Caco-2 (cell line): ENCODE measurements at regions of chrX and their contacts with region 1.

Region 1: GRCh38 chrX:129462707-129463106 is 60.6 kb downstream of the SMARCA1 start:
- DNase-seq: no peak
- H3K4me3 ChIP-seq: no peak overlapping the region
- H3K4me3 Mint-ChIP-seq: no peak overlapping the region
- H3K27ac Mint-ChIP-seq: no peak overlapping the region
- H3K4me1 ChIP-seq: no peaks in the 10 kb centered on the region
- H3K4me1 Mint-ChIP-seq: no peaks in the 10 kb centered on the region
- H3K27me3 ChIP-seq: no peaks in the 10 kb centered on the region
- H3K27me3 Mint-ChIP-seq: no peaks in the 10 kb centered on the region
- CTCF ChIP-seq: no peak

Region 2: DNA sequence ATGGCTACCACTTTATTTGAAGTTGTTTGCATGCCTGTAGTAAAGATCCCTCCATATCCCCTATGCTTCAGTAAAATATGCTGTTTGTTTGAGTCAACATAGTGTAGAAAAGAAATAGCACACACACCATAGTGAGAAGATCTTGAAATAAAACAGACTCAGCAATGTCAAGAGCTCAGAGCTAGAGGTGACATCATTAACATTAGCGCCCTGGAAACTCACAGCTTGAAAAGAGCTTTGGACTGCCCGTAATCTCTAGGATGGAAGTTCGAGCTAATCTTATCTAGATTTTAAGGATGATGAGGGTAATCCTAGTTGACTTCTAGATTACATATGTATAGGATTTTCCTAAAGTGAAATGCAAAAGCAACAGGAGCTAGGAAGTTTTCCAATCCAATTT is 215.1 kb before region 1 on chrX:
- CTCF ChIA-PET with region 1: no interaction called
- POLR2A ChIA-PET with region 1: no interaction called
- intact Hi-C with region 1: no loop called
- DNase-seq: no peak
- H3K4me3 ChIP-seq: no peak overlapping the region
- H3K4me3 Mint-ChIP-seq: no peak overlapping the region
- H3K27ac Mint-ChIP-seq: no peak overlapping the region
- H3K4me1 ChIP-seq: no peaks in the 10 kb centered on the region
- H3K4me1 Mint-ChIP-seq: no peaks in the 10 kb centered on the region
- H3K27me3 ChIP-seq: no peaks in the 10 kb centered on the region
- H3K27me3 Mint-ChIP-seq: no peaks in the 10 kb centered on the region
- CTCF ChIP-seq: no peak

Region 3: GRCh38 chrX:129318375-129318774 is 144.3 kb before region 1 on chrX:
- CTCF ChIA-PET with region 1: no interaction called
- POLR2A ChIA-PET with region 1: no interaction called
- intact Hi-C with region 1: loop called (anchors 1 kb)
- DNase-seq: peak in 1 of 2 experiments; percentile 13
- H3K4me3 ChIP-seq: no peak overlapping the region
- H3K4me3 Mint-ChIP-seq: no peak overlapping the region
- H3K27ac Mint-ChIP-seq: no peak overlapping the region
- H3K4me1 ChIP-seq: no peaks in the 10 kb centered on the region
- H3K4me1 Mint-ChIP-seq: no peaks in the 10 kb centered on the region
- H3K27me3 ChIP-seq: no peaks in the 10 kb centered on the region
- H3K27me3 Mint-ChIP-seq: peaks cover 2% of the 10 kb centered on the region
- CTCF ChIP-seq: peak; percentile 46 to 49

Region 4: GRCh38 chrX:129540068-129540653 is 77.5 kb after region 1 on chrX and contains the start of gene OCRL:
- CTCF ChIA-PET with region 1: no interaction called
- POLR2A ChIA-PET with region 1: no interaction called
- intact Hi-C with region 1: no loop called
- DNase-seq: peak; percentile 69 to 80
- H3K4me3 ChIP-seq: peak within 1 kb of the TSS; percentile 75
- H3K4me3 Mint-ChIP-seq: peak within 1 kb of the TSS; percentile 65
- H3K27ac Mint-ChIP-seq: no peak within 1 kb of the TSS
- H3K4me1 ChIP-seq: peaks cover 3% of the 10 kb centered on the region; the same call in 1 of the 2 replicates
- H3K4me1 Mint-ChIP-seq: peaks cover 6% of the 10 kb centered on the region
- H3K27me3 ChIP-seq: no peaks in the 10 kb centered on the region
- H3K27me3 Mint-ChIP-seq: no peaks in the 10 kb centered on the region
- CTCF ChIP-seq: peak; percentile 52 to 78
- total RNA-seq, gene OCRL: 22.3 and 24.2 TPM in 2 replicates